Activated B cell treated with CpG ODN at 0.5 μM for 24 hours (primary cell): ENCODE measurements at regions of chr19 and their contacts with region 1.

Region 1: DNA sequence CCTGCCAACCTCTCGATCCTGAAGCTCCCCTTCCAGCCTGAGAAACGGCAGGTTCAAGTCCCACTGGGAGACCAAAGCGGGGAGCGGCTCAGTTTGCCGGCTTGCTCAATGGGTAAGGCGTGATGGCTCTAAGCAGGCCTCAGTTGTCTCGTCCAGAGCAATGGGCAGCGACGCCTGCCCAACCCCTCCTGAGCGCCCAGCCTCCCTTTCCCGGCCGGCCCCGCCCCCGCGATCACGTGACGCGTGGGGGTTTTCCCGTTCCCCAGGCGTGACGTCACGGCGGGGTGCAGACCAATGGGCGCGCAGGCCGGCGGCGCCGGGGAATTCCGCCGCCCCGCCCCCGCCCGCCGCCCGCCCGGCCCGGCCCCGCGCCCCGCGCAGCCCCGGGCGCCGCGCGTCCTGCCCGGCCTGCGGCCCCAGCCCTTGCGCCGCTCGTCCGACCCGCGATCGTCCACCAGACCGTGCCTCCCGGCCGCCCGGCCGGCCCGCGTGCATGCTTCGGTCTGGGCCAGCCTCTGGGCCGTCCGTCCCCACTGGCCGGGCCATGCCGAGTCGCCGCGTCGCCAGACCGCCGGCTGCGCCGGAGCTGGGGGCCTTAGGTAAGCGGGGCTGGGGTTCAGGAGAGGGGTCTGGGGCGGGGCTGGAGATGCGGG is at the start of gene RELB:
- DNase-seq: peak; percentile 99
- ATAC-seq: peak; percentile 43
- H3K4me3 Mint-ChIP-seq: peak within 1 kb of the TSS; percentile 98
- H3K27ac Mint-ChIP-seq: peak within 1 kb of the TSS; percentile 99
- H3K4me1 Mint-ChIP-seq: peaks cover 36% of the 10 kb centered on the region
- H3K27me3 Mint-ChIP-seq: no peaks in the 10 kb centered on the region
- CTCF ChIP-seq: no peak
- total RNA-seq, gene RELB: 117 and 135 TPM in 2 replicates

Region 2: GRCh38 chr19:44643605-44644401 is 357.4 kb before region 1 on chr19 and contains the start of gene PVR:
- CTCF ChIA-PET with region 1: no interaction called
- POLR2A ChIA-PET with region 1: no interaction called
- intact Hi-C with region 1: no loop called
- DNase-seq: no peak
- ATAC-seq: no peak
- H3K4me3 Mint-ChIP-seq: peak within 1 kb of the TSS; percentile 44
- H3K27ac Mint-ChIP-seq: no peak within 1 kb of the TSS
- H3K4me1 Mint-ChIP-seq: peaks cover 5% of the 10 kb centered on the region
- H3K27me3 Mint-ChIP-seq: peaks cover 33% of the 10 kb centered on the region
- CTCF ChIP-seq: no peak
- total RNA-seq, gene PVR: 0.10 TPM in 1 of 2 replicates, not detected in the other

Region 3: DNA sequence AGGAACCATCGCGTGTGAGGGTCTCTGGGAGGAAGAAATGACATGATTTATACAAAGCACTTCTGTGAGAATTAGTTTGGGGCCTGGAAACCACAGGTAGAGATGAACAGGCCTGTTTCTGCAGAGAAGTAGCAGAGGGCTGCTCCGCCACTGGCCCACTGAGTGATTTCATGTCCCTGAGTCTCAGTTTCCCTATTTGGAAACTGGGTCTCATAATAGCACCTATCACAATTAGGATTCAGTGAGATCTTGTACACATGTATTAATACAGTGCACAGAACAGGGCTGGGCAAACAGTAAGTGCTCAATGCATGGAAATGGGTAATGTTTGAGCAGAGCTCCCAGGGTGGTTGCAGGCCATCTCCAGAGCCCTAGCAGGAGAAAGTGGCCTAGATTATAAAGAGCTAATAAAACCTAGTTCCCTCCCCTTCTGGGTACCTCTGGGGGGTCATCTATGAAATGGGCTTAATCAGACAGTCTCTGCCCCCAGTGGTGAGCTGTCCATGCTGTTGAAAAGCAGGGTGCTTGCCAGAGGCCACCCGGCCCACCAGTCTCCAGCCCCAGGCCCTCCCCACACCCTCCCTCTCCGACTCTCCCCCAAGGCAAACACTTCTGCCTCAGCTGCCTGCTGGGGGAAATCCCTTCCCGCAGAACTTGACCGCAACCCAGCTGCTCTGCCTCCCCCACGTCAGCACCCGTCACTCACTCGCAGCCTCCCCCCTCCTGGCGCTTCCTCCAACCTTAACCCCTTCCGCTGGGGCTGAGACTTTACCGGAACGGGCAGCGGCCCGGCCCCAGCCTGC is 248.2 kb before region 1 on chr19:
- CTCF ChIA-PET with region 1: no interaction called
- POLR2A ChIA-PET with region 1: interaction called, 6 read pairs
- intact Hi-C with region 1: loop called (anchors 5 kb)
- DNase-seq: peak; percentile 87
- ATAC-seq: peak; percentile 76
- H3K4me3 Mint-ChIP-seq: peak overlapping the region; percentile 95
- H3K27ac Mint-ChIP-seq: peak overlapping the region; percentile 96
- H3K4me1 Mint-ChIP-seq: peaks cover 68% of the 10 kb centered on the region
- H3K27me3 Mint-ChIP-seq: no peaks in the 10 kb centered on the region
- CTCF ChIP-seq: no peak

Region 4: DNA sequence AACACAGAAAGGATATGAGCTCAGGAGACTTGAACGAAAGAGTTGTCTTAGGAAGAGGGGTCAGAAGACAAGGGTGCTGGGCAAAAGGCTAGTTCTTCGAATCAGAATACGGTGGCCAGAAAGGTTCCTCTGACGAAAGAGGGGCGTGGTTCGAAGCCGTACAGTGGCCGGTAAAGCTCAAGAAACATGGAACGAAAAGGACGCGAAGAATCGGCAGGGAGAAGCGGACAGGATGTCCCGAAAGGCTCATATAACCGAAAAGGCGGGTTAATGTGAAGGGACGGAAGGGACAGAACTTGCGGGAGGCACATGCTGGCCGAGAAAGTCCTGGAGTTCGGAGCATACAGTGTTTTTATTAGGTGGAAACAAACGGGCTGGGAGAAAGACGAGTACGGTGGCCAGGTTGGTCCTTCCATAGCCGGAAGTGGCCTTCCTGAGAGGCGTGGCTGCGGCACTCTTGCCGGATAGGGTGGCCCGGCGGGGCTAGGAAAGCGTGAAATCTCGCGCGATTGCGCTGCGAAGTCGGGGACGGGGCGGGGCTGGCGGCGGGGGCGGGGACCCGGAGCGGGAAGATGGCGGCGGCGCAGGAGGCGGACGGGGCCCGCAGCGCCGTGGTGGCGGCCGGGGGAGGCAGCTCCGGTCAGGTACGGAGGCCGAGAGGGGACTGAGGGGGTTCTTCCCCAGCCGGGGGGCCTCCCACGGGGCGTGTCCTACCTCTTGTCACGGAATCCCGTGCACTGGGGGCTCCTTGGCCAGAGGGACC is 46.2 kb before region 1 on chr19 and contains the start of gene CLPTM1:
- CTCF ChIA-PET with region 1: interaction called, 4 read pairs
- POLR2A ChIA-PET with region 1: interaction called, 34 read pairs
- intact Hi-C with region 1: loop called (anchors 1 kb)
- DNase-seq: peak; percentile 85
- ATAC-seq: peak; percentile 89
- H3K4me3 Mint-ChIP-seq: peak within 1 kb of the TSS; percentile 97
- H3K27ac Mint-ChIP-seq: peak within 1 kb of the TSS; percentile 97
- H3K4me1 Mint-ChIP-seq: peaks cover 57% of the 10 kb centered on the region
- H3K27me3 Mint-ChIP-seq: no peaks in the 10 kb centered on the region
- CTCF ChIP-seq: no peak
- total RNA-seq, gene CLPTM1: 87.0 and 92.1 TPM in 2 replicates

Region 5: GRCh38 chr19:44988896-44989556 is 12.2 kb before region 1 on chr19:
- CTCF ChIA-PET with region 1: interaction called, 3 read pairs
- POLR2A ChIA-PET with region 1: interaction called, 14 read pairs
- intact Hi-C with region 1: no loop called
- DNase-seq: peak; percentile 57
- ATAC-seq: peak; percentile 97
- H3K4me3 Mint-ChIP-seq: no peak overlapping the region
- H3K27ac Mint-ChIP-seq: no peak overlapping the region
- H3K4me1 Mint-ChIP-seq: no peaks in the 10 kb centered on the region
- H3K27me3 Mint-ChIP-seq: no peaks in the 10 kb centered on the region
- CTCF ChIP-seq: no peak

Region 6: GRCh38 chr19:45038931-45039893 is 38.0 kb after region 1 on chr19 and contains the start of gene CLASRP:
- CTCF ChIA-PET with region 1: no interaction called
- POLR2A ChIA-PET with region 1: interaction called, 66 read pairs
- intact Hi-C with region 1: loop called (anchors 1 kb)
- DNase-seq: peak; percentile 90
- ATAC-seq: peak; percentile 89
- H3K4me3 Mint-ChIP-seq: peak within 1 kb of the TSS; percentile 98
- H3K27ac Mint-ChIP-seq: peak within 1 kb of the TSS; percentile 91
- H3K4me1 Mint-ChIP-seq: peaks cover 38% of the 10 kb centered on the region
- H3K27me3 Mint-ChIP-seq: no peaks in the 10 kb centered on the region
- CTCF ChIP-seq: no peak
- total RNA-seq, gene CLASRP: 133 and 172 TPM in 2 replicates

Region 7: DNA sequence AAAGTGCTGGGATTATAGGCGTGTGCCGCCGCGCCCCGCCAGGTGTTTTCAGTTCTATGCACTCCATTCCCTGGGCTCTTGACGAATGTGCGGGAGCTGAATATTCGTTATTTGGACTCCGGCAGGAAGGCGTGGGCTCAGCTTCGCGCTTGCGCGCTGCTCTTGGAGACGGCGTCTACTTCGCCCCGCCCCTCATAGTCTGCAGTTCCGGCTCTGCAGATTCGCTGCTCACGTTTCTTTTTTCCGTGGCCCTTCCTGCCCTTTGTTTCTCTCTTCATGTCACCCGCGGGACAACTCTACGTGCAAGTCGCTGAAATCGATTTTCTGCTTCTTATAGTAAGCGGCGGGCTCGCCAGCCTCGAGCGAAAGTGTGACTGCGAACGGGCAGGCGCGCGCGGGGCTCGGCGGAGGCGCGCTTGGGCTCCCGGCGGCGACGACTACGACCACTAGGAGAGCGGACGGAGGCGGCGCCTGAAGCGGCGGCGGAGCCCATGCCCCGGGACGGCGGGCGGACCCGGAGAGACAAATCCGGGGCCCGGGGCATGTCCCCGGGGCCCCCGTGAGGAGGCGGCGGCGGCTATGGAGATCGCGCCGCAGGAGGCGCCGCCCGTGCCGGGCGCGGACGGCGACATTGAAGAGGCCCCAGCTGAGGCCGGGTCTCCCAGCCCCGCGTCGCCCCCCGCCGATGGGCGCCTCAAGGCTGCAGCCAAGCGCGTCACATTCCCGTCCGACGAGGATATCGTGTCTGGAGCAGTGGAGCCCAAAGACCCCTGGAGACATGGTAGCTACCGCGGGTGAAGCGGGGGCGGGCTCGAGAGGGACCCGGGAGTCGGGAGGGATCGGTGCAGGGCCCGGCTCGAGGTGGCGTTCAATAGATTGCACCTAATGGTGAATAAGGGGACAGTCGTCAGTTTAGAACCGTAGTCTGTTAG is 91.8 kb after region 1 on chr19 and contains the start of gene PPP1R37:
- CTCF ChIA-PET with region 1: no interaction called
- POLR2A ChIA-PET with region 1: interaction called, 32 read pairs
- intact Hi-C with region 1: loop called (anchors 1 kb)
- DNase-seq: peak; percentile 81
- ATAC-seq: peak; percentile 69
- H3K4me3 Mint-ChIP-seq: peak within 1 kb of the TSS; percentile 93
- H3K27ac Mint-ChIP-seq: peak within 1 kb of the TSS; percentile 99
- H3K4me1 Mint-ChIP-seq: peaks cover 54% of the 10 kb centered on the region
- H3K27me3 Mint-ChIP-seq: no peaks in the 10 kb centered on the region
- CTCF ChIP-seq: no peak
- total RNA-seq, gene PPP1R37: 18.8 and 27.2 TPM in 2 replicates